ENCODE measurements at regions of chr17 and their contacts with region 1.

Region 1: GRCh38 chr17:19248928-19249574 is 11.9 kb downstream of the EPN2 start:
- DNase-seq: no peak
- ATAC-seq: peak in 1 of 2 experiments; percentile 57; a peak in 3 of 6 replicates
- H3K4me3 ChIP-seq: no peak overlapping the region
- H3K27ac ChIP-seq: peak overlapping the region in 1 of 2 experiments; percentile 20; a peak in 1 of 6 replicates
- H3K4me1 ChIP-seq: peaks cover 13% of the 10 kb centered on the region; the same call in 1 of the 3 replicates
- CTCF ChIP-seq: no peak
- EP300 ChIP-seq: no peak
- POLR2A ChIP-seq: no peak
- RAD21 ChIP-seq: no peak

Region 2: GRCh38 chr17:18877104-18877503 is 371.9 kb before region 1 on chr17:
- CTCF ChIA-PET with region 1: no interaction called
- POLR2A ChIA-PET with region 1: no interaction called
- DNase-seq: peak in 1 of 2 experiments; percentile 21
- ATAC-seq: peak; percentile 64 to 83; a peak in 4 of 6 replicates
- H3K4me3 ChIP-seq: no peak overlapping the region
- H3K27ac ChIP-seq: peak overlapping the region in 1 of 2 experiments; percentile 65; a peak in 4 of 6 replicates
- H3K4me1 ChIP-seq: peaks cover 11% of the 10 kb centered on the region; the same call in 2 of the 3 replicates
- CTCF ChIP-seq: no peak
- EP300 ChIP-seq: no peak
- POLR2A ChIP-seq: no peak
- RAD21 ChIP-seq: no peak

Region 3: GRCh38 chr17:18910881-18911280 is 338.2 kb before region 1 on chr17:
- CTCF ChIA-PET with region 1: no interaction called
- POLR2A ChIA-PET with region 1: no interaction called
- DNase-seq: no peak
- ATAC-seq: no peak; a peak in 1 of 6 replicates
- H3K4me3 ChIP-seq: no peak overlapping the region
- H3K27ac ChIP-seq: no peak overlapping the region
- H3K4me1 ChIP-seq: no peaks in the 10 kb centered on the region
- CTCF ChIP-seq: no peak
- EP300 ChIP-seq: no peak
- POLR2A ChIP-seq: no peak
- RAD21 ChIP-seq: no peak

Region 4: GRCh38 chr17:19237389-19238166 is 11.5 kb before region 1 on chr17:
- CTCF ChIA-PET with region 1: interaction called, 21 read pairs
- POLR2A ChIA-PET with region 1: no interaction called
- DNase-seq: peak; percentile 49 to 51
- ATAC-seq: peak; percentile 71 to 83
- H3K4me3 ChIP-seq: peak overlapping the region; percentile 93
- H3K27ac ChIP-seq: peak overlapping the region; percentile 89 to 97
- H3K4me1 ChIP-seq: peaks cover 14% of the 10 kb centered on the region
- CTCF ChIP-seq: 0 out of 3 replicates have a peak, but pooled peaks have one; percentile 7
- EP300 ChIP-seq: no peak
- POLR2A ChIP-seq: peak; percentile 49
- RAD21 ChIP-seq: peak in 1 of 2 experiments; percentile 31; a peak in 1 of 5 replicates

Region 5: GRCh38 chr17:19470532-19471261 is 221.6 kb after region 1 on chr17:
- CTCF ChIA-PET with region 1: no interaction called
- POLR2A ChIA-PET with region 1: no interaction called
- DNase-seq: no peak
- ATAC-seq: 0 out of 6 replicates have a peak, but pooled peaks of 1 of the 2 experiments have one; percentile 31
- H3K4me3 ChIP-seq: no peak overlapping the region
- H3K27ac ChIP-seq: no peak overlapping the region
- H3K4me1 ChIP-seq: no peaks in the 10 kb centered on the region
- CTCF ChIP-seq: no peak
- EP300 ChIP-seq: no peak
- POLR2A ChIP-seq: no peak
- RAD21 ChIP-seq: no peak

Region 6: DNA sequence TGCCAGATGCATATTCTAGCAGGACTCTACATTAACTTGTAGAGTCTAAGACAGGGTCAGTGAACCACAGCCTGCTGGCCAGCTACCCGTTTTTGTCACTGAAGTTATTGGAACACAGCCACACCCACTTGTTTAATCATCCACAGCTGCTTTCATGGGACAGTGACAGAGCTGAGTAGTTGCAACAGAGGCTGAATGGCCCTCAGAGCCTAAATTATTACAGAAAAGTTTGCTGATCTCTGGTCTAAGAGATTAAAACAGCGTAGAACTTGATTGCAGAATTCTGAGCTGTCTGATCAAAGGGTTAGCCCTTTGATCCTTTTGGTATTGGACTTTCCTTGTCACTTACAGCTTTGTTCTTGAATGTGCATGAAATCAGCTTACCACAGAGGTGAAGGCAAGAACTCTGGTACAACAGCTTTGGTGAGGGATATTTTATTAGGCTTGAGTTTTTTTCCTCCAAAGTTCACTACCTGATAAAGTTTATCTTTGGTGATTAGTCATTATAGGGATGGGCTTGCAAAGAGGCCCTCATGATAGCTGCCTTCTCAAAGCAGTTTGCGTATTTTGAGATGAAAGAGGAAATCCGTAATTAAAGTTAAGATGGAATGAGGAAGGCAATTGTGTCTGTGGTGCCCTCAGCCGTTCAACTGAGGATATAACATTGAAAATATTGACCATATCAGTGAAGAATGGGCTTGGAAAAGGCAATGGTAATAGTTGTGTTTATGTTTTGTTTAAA is 423.1 kb after region 1 on chr17:
- CTCF ChIA-PET with region 1: no interaction called
- POLR2A ChIA-PET with region 1: no interaction called
- DNase-seq: no peak
- ATAC-seq: peak; percentile 41 to 67
- H3K4me3 ChIP-seq: no peak overlapping the region
- H3K27ac ChIP-seq: peak overlapping the region in 1 of 2 experiments; percentile 39; a peak in 3 of 6 replicates
- H3K4me1 ChIP-seq: peaks cover 20% of the 10 kb centered on the region
- CTCF ChIP-seq: peak; percentile 8; the same call in 1 of the 3 replicates
- EP300 ChIP-seq: no peak
- POLR2A ChIP-seq: no peak
- RAD21 ChIP-seq: peak in 1 of 2 experiments; percentile 34; a peak in 2 of 5 replicates